Activated naive CD4-positive, alpha-beta T cell treated with anti-CD3 and anti-CD28 coated beads, Interleukin-2, amount 10 ng/mL, durations not matched to agents 7 days and 5 days (primary cell): ENCODE measurements at regions of chr6 and their contacts with region 1.

Region 1: DNA sequence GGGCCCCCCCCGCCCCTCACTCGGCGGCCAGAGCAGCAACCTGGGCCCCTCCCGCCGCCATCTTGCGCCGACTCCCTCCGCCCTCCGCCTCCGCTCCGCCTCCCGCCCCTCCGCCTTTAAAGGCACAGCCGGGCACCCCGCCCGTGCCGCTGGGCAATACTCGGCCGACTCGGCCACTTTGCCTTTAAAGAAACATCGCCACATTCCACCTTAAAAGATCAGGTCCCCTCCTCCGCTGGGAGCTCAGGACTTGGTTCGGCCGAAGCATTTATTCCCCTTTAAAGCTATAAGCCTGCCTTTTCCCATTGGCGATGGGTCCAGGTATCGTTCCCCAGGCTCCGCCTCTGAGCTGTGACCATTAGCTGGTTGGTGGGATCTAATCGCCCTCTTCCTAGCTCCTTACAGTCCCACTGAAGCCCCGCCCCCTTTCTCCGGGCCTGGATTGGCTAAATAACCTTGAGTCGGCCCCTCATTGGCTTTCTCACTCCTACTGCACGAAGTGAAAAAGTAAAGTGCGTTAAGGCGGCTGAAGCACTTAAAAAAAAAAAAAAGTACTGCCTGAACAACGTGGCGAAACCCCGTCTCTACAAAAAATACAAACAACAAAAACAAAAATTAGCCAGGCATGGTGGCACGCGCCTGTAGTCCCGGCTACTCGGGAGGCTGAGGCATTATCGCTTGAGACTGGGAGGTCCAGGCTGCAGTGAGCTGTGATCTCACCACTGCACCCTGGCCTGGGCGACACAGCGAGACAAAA is at the start of gene ZBTB22:
- DNase-seq: peak; percentile 98
- H3K4me3 Mint-ChIP-seq: peak within 1 kb of the TSS; percentile 99
- H3K27ac Mint-ChIP-seq: peak within 1 kb of the TSS; percentile 96
- H3K4me1 Mint-ChIP-seq: peaks cover 82% of the 10 kb centered on the region
- H3K27me3 Mint-ChIP-seq: peaks cover 3% of the 10 kb centered on the region

Region 2: DNA sequence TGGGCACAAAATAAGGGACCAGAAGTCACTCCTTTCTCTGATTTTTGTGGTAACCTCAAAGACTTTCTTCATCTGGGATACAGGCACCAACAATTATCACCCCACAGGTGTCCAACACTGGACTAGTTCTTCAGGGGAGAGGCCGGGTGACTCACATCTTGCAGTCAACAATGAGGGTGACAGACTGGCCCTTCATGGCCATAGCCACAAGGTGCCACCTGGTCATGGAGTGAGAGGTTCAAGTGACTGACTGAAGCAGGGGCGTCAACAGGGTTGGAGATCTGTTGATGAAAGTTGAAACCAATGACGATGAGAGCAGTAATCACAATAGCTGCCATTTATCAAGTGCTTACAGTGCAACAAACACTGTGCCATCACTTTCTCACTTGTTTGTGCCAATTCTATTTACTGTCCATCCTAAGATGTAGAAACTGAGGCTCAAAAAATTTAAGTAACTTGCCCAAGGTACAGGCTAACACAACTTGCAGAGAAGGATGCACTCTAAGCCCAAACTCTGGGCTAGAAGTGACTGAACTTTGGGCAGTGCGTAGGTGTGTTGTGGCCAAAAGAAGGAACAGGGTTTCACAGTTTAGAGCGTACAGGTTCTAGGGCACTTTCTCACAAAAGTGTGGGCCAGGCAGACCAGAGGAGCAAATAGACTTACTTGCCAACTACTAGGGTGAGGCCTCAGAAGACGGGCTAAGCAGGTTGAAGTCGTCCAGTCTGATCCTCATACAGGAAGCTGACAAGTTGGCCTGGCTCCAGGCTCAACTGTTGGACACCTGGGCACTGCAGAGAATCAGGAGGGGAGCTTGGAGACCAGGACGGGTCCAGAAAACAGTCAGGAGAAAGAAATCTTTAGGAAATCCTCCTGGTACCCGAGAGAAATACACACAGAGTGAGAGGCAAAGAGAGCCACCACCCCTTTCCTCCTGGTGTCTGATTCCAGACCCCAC is 211.7 kb before region 1 on chr6:
- CTCF ChIA-PET with region 1: no interaction called
- DNase-seq: no peak
- H3K4me3 Mint-ChIP-seq: no peak overlapping the region
- H3K27ac Mint-ChIP-seq: no peak overlapping the region
- H3K4me1 Mint-ChIP-seq: no peaks in the 10 kb centered on the region
- H3K27me3 Mint-ChIP-seq: peaks cover 59% of the 10 kb centered on the region

Region 3: GRCh38 chr6:33344701-33345697 is 27.2 kb after region 1 on chr6:
- CTCF ChIA-PET with region 1: interaction called, 18 read pairs
- DNase-seq: peak; percentile 79
- H3K4me3 Mint-ChIP-seq: peak overlapping the region; percentile 63
- H3K27ac Mint-ChIP-seq: peak overlapping the region; percentile 94
- H3K4me1 Mint-ChIP-seq: peaks cover 57% of the 10 kb centered on the region
- H3K27me3 Mint-ChIP-seq: no peaks in the 10 kb centered on the region